Colonic mucosa (tissue), 4 donors: ENCODE measurements at regions of chr12 and their contacts with region 1.

Region 1: DNA sequence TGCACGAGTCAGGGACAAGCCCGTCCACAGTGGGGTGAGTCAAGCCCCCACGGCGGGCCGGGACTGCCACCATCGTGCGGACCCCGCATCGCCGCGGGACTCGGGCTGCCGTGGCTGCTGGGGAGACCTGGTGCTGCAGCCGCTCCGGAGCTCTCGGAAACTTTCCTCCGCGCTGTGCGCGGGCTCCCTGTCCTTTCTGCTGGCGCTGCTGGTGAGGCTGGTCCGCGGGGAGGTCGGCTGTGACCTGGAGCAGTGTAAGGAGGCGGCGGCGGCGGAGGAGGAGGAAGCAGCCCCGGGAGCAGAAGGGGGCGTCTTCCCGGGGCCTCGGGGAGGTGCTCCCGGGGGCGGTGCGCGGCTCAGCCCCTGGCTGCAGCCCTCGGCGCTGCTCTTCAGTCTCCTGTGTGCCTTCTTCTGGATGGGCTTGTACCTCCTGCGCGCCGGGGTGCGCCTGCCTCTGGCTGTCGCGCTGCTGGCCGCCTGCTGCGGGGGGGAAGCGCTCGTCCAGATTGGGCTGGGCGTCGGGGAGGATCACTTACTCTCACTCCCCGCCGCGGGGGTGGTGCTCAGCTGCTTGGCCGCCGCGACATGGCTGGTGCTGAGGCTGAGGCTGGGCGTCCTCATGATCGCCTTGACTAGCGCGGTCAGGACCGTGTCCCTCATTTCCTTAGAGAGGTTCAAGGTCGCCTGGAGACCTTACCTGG is 1.1 kb downstream of the PDE3A start:
- DNase-seq: peak; percentile 80
- H3K4me3 ChIP-seq: peak overlapping the region; percentile 70
- H3K27ac ChIP-seq: peak overlapping the region; percentile 89
- H3K4me1 ChIP-seq: no peaks in the 10 kb centered on the region
- H3K27me3 ChIP-seq: no peaks in the 10 kb centered on the region
- CTCF ChIP-seq: no peak

Region 2: GRCh38 chr12:19739183-19739776 is 630.2 kb before region 1 on chr12:
- intact Hi-C with region 1: loop called (anchors 10 kb)
- DNase-seq: peak; percentile 60
- H3K4me3 ChIP-seq: no peak overlapping the region
- H3K27ac ChIP-seq: no peak overlapping the region
- H3K4me1 ChIP-seq: no peaks in the 10 kb centered on the region
- H3K27me3 ChIP-seq: no peaks in the 10 kb centered on the region
- CTCF ChIP-seq: peak; percentile 51

Region 3: DNA sequence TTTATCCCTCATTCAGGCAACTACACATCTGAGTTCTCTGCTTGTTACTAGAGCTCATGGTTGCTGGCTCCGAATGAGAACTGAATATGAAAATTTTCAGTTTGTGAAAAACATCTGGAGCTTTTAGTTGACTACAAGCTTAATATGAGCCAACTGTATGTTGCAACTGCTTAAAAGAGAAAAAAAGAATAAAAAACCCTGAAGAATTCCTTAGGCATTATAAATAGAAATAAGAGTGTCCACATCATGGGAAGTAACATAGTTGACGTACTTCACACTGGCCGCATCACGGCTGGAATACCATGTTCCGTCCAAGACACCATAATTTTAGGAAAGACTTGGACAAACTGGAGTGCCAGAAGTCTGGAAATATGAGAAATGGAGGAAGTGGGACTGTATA is 56.7 kb after region 1 on chr12:
- intact Hi-C with region 1: loop called (anchors 10 kb)
- DNase-seq: no peak
- H3K4me3 ChIP-seq: no peak overlapping the region
- H3K27ac ChIP-seq: no peak overlapping the region
- H3K4me1 ChIP-seq: no peaks in the 10 kb centered on the region
- H3K27me3 ChIP-seq: no peaks in the 10 kb centered on the region
- CTCF ChIP-seq: no peak

Region 4: DNA sequence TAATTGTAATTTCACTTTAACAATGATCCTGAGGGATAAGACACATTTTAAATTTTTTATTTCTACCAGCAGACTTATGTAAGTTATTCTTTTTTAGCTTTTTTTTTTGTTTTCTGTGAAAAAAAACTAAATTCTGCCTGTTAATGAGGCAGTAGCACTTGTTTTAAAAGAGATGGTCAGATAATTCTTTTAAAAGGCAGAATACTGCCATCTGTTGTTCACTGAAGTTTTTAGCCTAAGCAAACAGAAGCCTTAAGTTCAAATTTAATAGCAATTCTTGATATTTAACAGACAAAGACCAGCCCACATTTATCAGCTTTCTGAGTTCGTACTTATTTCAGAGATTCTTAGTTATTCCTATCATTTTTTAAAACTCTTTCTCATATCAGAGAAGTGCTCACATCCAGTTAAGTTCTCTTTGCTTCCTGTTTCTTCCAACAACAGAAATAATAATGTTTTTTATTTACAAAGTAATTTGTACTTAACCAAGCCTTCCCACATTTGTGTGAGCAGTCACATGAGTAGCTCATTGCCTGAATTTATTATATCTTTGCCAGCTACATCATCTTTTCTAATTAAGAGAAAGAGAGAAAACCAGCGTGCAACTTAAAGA is 232.3 kb after region 1 on chr12:
- intact Hi-C with region 1: loop called (anchors 10 kb)
- DNase-seq: no peak
- H3K4me3 ChIP-seq: no peak overlapping the region
- H3K27ac ChIP-seq: no peak overlapping the region
- H3K4me1 ChIP-seq: no peaks in the 10 kb centered on the region
- H3K27me3 ChIP-seq: no peaks in the 10 kb centered on the region
- CTCF ChIP-seq: peak; percentile 40